ENCODE measurements at regions of chr11 and their contacts with region 1.

Region 1: GRCh38 chr11:19553683-19554333 is 158.8 kb upstream of the NAV2 start:
- DNase-seq: no peak
- ATAC-seq: peak; percentile 94
- H3K4me3 ChIP-seq: no peak overlapping the region
- H3K27ac ChIP-seq: no peak overlapping the region
- H3K4me1 ChIP-seq: peaks cover 13% of the 10 kb centered on the region
- H3K27me3 ChIP-seq: no peaks in the 10 kb centered on the region; a peak in 1 of 4 replicates
- CTCF ChIP-seq: peak; percentile 77 to 94 (median 82)
- EP300 ChIP-seq: no peak
- POLR2A ChIP-seq: no peak
- RAD21 ChIP-seq: peak; percentile 97

Region 2: GRCh38 chr11:19071255-19071654 is 482.6 kb before region 1 on chr11:
- CTCF ChIA-PET with region 1: interaction called, 77 read pairs
- POLR2A ChIA-PET with region 1: no interaction called
- RAD21 ChIA-PET with region 1: interaction called, 7 read pairs
- SMC1A ChIA-PET with region 1: interaction called, 5 read pairs
- in situ Hi-C with region 1: loop called (anchors 5 kb)
- intact Hi-C with region 1: loop called (anchors 2 kb)
- DNase-seq: peak; percentile 48
- ATAC-seq: peak; percentile 96
- H3K4me3 ChIP-seq: no peak overlapping the region
- H3K27ac ChIP-seq: no peak overlapping the region
- H3K4me1 ChIP-seq: no peaks in the 10 kb centered on the region
- H3K27me3 ChIP-seq: peaks cover 0 to 2% of the 10 kb centered on the region in 2 experiments; a peak in 2 of 4 replicates
- CTCF ChIP-seq: peak; percentile 93 to 99 (median 99)
- EP300 ChIP-seq: no peak
- POLR2A ChIP-seq: no peak
- RAD21 ChIP-seq: peak; percentile 85

Region 3: GRCh38 chr11:19259487-19260345 is 294.1 kb before region 1 on chr11:
- CTCF ChIA-PET with region 1: interaction called, 103 read pairs
- POLR2A ChIA-PET with region 1: no interaction called
- RAD21 ChIA-PET with region 1: interaction called, 15 read pairs
- SMC1A ChIA-PET with region 1: interaction called, 12 read pairs
- in situ Hi-C with region 1: no loop called
- intact Hi-C with region 1: loop called (anchors 1 kb)
- DNase-seq: no peak
- ATAC-seq: peak; percentile 91
- H3K4me3 ChIP-seq: no peak overlapping the region
- H3K27ac ChIP-seq: no peak overlapping the region
- H3K4me1 ChIP-seq: no peaks in the 10 kb centered on the region; the same call in 1 of the 2 replicates
- H3K27me3 ChIP-seq: no peaks in the 10 kb centered on the region; a peak in 1 of 4 replicates
- CTCF ChIP-seq: peak; percentile 90 to 96 (median 93)
- EP300 ChIP-seq: no peak
- POLR2A ChIP-seq: no peak
- RAD21 ChIP-seq: peak; percentile 78

Region 4: DNA sequence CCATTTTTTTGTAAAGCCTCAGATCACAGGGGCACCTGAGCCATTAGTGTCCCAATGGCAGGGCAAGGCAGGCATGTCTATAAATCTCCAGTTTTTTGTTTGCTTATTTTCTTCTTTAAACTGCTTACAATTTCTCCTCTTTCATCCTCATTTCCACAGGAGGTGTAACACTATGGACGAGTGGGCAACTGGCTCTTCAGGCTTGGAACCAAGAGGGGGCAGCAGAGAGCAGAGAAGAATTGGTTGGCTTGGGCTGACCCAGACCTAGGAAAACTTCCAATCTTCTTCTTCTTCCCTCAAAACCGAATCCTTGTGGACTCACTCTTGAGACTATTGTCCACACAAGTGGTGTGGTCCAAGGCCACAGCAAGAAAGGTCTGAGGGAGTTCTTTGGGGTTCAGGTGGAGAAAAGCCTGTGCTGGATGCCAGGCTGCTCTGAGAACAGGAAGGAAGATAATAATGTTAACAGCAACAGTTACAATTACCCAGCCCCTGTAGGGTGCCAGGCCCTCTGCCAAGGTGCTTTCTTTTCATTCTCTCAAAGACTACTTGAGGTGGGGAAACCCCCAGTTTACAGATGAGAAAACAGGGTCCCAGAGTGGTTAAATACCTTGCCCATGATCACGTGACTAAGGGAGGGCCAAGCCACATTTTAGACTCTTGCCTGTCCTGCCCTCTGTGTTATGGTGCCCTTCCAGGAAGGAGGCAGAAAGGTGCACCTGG is 242.3 kb before region 1 on chr11:
- CTCF ChIA-PET with region 1: interaction called, 28 read pairs
- POLR2A ChIA-PET with region 1: no interaction called
- RAD21 ChIA-PET with region 1: interaction called, 12 read pairs
- SMC1A ChIA-PET with region 1: interaction called, 4 read pairs
- in situ Hi-C with region 1: loop called (anchors 5 kb)
- intact Hi-C with region 1: loop called (anchors 1 kb)
- DNase-seq: peak; percentile 19
- ATAC-seq: peak; percentile 92
- H3K4me3 ChIP-seq: no peak overlapping the region
- H3K27ac ChIP-seq: no peak overlapping the region
- H3K4me1 ChIP-seq: peaks cover 6% of the 10 kb centered on the region; the same call in 1 of the 2 replicates
- H3K27me3 ChIP-seq: no peaks in the 10 kb centered on the region
- CTCF ChIP-seq: peak; percentile 75 to 86 (median 79)
- EP300 ChIP-seq: no peak
- POLR2A ChIP-seq: no peak
- RAD21 ChIP-seq: peak; percentile 81

Region 5: DNA sequence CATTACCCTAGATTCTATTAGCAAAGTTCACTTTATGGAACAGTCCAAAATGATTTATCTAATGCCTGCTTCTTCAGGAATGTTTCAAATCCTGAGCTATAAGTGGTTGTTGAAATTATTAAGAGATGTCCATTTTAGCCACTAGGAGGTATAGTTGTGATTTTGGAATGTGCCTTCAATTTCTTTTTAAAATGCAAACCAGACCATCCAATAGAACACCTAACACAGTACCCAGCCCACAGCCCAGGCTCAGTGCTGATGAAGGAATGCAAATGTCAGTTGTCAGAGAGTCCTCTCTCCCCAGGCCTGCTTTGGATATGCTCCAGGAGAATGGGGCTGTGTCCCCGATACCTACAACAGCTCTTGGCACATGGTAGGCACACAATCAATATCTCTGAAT is 227.3 kb before region 1 on chr11:
- CTCF ChIA-PET with region 1: interaction called, 70 read pairs
- POLR2A ChIA-PET with region 1: interaction called, 6 read pairs
- RAD21 ChIA-PET with region 1: interaction called, 9 read pairs
- SMC1A ChIA-PET with region 1: interaction called, 24 read pairs
- in situ Hi-C with region 1: no loop called
- intact Hi-C with region 1: loop called (anchors 1 kb)
- DNase-seq: no peak
- ATAC-seq: peak; percentile 36
- H3K4me3 ChIP-seq: no peak overlapping the region
- H3K27ac ChIP-seq: no peak overlapping the region
- H3K4me1 ChIP-seq: peaks cover 30% of the 10 kb centered on the region
- H3K27me3 ChIP-seq: no peaks in the 10 kb centered on the region
- CTCF ChIP-seq: peak in 2 of 3 experiments; percentile 13 to 30; a peak in 2 of 6 replicates
- EP300 ChIP-seq: no peak
- POLR2A ChIP-seq: no peak
- RAD21 ChIP-seq: peak; percentile 42; the same call in 1 of the 2 replicates

Region 6: DNA sequence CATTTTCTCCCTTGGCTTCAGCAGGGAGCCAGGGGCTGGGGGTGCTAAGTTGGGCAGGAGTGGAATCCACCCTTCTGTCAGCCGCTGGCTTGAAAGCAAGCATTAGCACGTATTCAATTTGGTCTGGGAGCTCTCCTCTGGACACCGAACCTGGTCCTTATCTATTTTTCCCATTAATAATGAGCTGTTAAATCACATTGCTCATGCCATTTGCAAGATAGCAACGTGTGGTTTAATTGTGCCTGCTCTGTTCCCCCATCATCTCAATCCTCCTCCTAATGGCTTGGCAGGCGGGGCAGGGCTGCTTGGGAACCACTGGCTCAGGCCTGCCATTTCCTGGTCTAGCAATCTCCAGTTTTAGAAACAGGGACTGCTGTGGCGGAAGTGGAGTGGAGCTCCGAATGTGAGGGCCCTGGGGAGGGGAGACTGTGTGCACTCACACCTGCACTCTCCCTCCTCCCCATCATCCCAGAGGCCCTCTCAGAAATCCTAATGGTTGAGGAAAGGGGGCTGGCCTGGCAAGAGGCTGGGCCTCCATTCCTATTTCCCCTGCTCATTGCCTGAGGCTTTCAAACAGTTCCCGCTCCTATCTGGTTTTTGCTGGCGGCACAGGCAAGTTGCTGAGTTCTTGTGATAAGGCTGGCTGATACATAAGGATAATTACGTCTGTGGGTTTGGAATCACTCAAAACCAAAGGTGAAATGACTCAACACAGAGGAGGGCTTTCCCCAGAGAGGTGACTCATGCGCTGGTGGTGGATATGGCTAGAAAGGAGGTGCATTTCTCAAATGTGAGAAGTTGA is 111.9 kb before region 1 on chr11:
- CTCF ChIA-PET with region 1: interaction called, 4 read pairs
- POLR2A ChIA-PET with region 1: no interaction called
- RAD21 ChIA-PET with region 1: no interaction called
- SMC1A ChIA-PET with region 1: no interaction called
- in situ Hi-C with region 1: no loop called
- intact Hi-C with region 1: loop called (anchors 5 kb)
- DNase-seq: peak; percentile 95
- ATAC-seq: peak; percentile 95
- H3K4me3 ChIP-seq: no peak overlapping the region
- H3K27ac ChIP-seq: peak overlapping the region; percentile 88
- H3K4me1 ChIP-seq: peaks cover 27% of the 10 kb centered on the region
- H3K27me3 ChIP-seq: no peaks in the 10 kb centered on the region
- CTCF ChIP-seq: no peak
- EP300 ChIP-seq: peak; percentile 92 to 99
- POLR2A ChIP-seq: no peak
- RAD21 ChIP-seq: peak; percentile 22; the same call in 1 of the 2 replicates

Region 7: DNA sequence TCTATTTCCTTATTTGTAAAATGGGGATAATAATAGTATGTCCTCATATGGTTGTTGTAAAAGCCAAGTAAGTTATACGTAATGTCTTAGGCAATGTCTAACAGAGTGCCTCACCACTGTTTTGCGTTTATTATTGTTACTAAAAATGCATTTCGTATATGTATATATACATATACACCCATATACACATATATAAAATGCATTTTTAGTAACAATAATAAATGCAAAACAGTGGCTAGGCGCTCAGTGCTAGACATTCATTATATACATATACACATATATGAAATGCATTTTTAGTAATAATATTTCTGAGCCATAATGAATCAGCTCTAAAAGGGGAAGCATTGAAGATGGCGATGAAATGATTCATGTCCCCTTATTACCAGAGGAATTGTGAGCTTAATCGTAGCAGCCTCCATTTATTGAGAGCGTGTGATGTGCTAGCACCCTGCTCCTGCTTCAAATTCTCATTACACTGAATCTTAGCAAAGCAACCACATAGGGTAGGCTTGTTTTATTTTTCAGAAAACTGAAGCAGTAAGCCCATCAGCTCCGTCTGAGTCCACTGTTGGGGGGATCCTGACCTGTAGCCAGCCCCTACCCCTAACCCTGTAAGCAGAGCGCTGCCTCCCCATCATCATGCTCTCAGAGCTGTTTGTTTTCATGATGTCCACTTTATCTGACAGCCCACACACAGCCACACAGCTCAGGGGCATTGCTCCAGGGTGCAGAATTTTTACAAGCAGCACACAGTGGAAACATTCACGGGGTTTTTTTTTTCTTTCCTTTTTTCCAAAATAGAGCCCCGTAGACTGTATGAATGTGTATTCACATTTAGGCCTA is 61.8 kb after region 1 on chr11:
- CTCF ChIA-PET with region 1: no interaction called
- POLR2A ChIA-PET with region 1: no interaction called
- RAD21 ChIA-PET with region 1: no interaction called
- SMC1A ChIA-PET with region 1: no interaction called
- in situ Hi-C with region 1: no loop called
- intact Hi-C with region 1: no loop called
- DNase-seq: no peak
- ATAC-seq: no peak
- H3K4me3 ChIP-seq: no peak overlapping the region
- H3K27ac ChIP-seq: no peak overlapping the region
- H3K4me1 ChIP-seq: no peaks in the 10 kb centered on the region
- H3K27me3 ChIP-seq: no peaks in the 10 kb centered on the region
- CTCF ChIP-seq: no peak
- EP300 ChIP-seq: no peak
- POLR2A ChIP-seq: no peak
- RAD21 ChIP-seq: no peak

Measured in GM12878 (cell line).